Naive thymus-derived CD4-positive, alpha-beta T cell (primary cell): ENCODE measurements at regions of chr7 and their contacts with region 1.

Region 1: DNA sequence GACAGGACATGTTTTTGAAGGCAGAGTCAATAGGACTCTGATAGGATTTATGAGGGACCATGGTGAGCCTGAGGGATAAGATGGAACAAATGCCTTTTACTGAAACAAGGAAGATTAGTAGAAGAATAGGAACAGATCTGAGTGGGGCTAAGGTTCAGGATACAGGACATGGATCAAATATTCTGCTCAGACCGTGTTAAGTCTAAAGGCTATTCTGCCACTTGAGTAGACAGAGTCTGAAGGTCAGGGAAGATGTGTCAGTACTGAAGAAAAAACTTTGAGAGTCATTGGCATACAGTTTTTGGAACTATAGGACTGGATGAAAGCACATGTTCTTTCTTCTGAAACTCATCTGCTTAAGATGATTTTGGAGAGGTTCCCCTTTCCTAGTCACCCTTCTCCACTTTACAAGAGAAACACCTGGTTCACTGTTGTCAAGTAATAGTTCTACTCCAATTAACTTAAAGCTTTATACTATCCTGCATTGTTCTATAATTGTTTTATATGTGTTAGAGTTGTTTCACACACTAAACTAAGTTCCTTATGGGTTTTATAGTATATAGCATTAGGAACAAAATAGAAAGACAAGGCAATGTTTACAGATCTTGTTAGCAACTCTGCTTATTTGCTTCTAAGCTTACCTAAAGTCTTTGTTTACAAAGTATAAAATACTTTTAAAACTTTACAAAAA is 43.4 kb downstream of the WASL start:
- DNase-seq: no peak
- ATAC-seq: no peak
- H3K4me3 ChIP-seq: no peak overlapping the region
- H3K4me3 Mint-ChIP-seq: no peak overlapping the region
- H3K27ac ChIP-seq: no peak overlapping the region
- H3K27ac Mint-ChIP-seq: peak overlapping the region in 6 of 9 donors; percentile 0 to 60 (median 18)
- H3K4me1 ChIP-seq: no peaks in the 10 kb centered on the region
- H3K4me1 Mint-ChIP-seq: peaks cover 0 to 8% (median 1%) of the 10 kb centered on the region in 7 donors
- H3K27me3 ChIP-seq: no peaks in the 10 kb centered on the region
- H3K27me3 Mint-ChIP-seq: no peaks in the 10 kb centered on the region

Region 2: DNA sequence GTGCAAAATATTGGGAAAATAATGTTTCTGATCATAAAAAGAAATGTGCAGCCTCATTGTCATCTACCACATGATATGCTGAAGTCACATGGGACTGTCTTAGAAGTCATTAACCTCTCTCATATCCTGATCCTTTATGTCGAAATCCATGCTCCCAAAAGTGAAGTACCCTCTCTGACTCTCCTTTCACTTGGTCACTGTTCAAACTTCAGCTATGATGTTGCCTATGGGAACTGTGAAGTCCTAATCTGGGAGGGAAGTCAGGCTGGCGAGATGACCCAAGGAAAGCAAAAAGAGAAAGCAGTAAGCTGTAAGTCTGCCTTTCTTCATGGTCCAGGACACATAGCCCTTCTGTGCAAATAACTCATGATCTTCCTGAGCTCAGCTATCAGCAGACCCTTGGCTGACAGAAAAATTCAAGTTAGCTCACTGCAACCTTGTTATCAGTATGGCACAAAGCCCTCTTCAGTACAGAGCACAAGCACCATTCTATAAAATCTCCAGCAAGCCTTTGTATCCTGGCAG is 13.9 kb after region 1 on chr7:
- CTCF ChIA-PET with region 1: no interaction called
- POLR2A ChIA-PET with region 1: no interaction called
- intact Hi-C with region 1: loop called in 1 of 2 experiments (anchors 2 kb)
- DNase-seq: no peak
- ATAC-seq: no peak
- H3K4me3 ChIP-seq: no peak overlapping the region
- H3K4me3 Mint-ChIP-seq: peak overlapping the region in 8 of 10 donors; percentile 6 to 53 (median 22)
- H3K27ac ChIP-seq: no peak overlapping the region
- H3K27ac Mint-ChIP-seq: peak overlapping the region in 5 of 9 donors; percentile 13 to 58 (median 54)
- H3K4me1 ChIP-seq: peaks cover 1 to 20% of the 10 kb centered on the region in 2 donors
- H3K4me1 Mint-ChIP-seq: peaks cover 32 to 88% (median 78%) of the 10 kb centered on the region in 7 donors
- H3K27me3 ChIP-seq: no peaks in the 10 kb centered on the region
- H3K27me3 Mint-ChIP-seq: no peaks in the 10 kb centered on the region